H1 (cell line): ENCODE measurements at regions of chr5 and their contacts with region 1.

Region 1: GRCh38 chr5:103441523-103441922 is 121.1 kb downstream of the NUDT12 start:
- DNase-seq: no peak
- H3K4me3 ChIP-seq: no peak overlapping the region
- H3K27ac ChIP-seq: no peak overlapping the region
- H3K4me1 ChIP-seq: peaks cover 0 to 7% (median 2%) of the 10 kb centered on the region in 4 experiments; a peak in 3 of 7 replicates
- H3K27me3 ChIP-seq: no peaks in the 10 kb centered on the region
- CTCF ChIP-seq: peak in 2 of 3 experiments; percentile 33 to 41; a peak in 2 of 4 replicates
- EP300 ChIP-seq: no peak
- POLR2A ChIP-seq: no peak
- RAD21 ChIP-seq: peak; percentile 19 to 44; a peak in 3 of 4 replicates

Region 2: GRCh38 chr5:103393101-103393754 is 48.3 kb before region 1 on chr5:
- CTCF ChIA-PET with region 1: interaction called, 13 read pairs
- POLR2A ChIA-PET with region 1: no interaction called
- DNase-seq: no peak
- H3K4me3 ChIP-seq: no peak overlapping the region
- H3K27ac ChIP-seq: no peak overlapping the region
- H3K4me1 ChIP-seq: peaks cover 0 to 17% (median 11%) of the 10 kb centered on the region in 4 experiments; a peak in 4 of 7 replicates
- H3K27me3 ChIP-seq: no peaks in the 10 kb centered on the region
- CTCF ChIP-seq: peak in 2 of 3 experiments; percentile 34 to 44; a peak in 3 of 4 replicates
- EP300 ChIP-seq: no peak
- POLR2A ChIP-seq: no peak
- RAD21 ChIP-seq: peak; percentile 54 to 65

Region 3: DNA sequence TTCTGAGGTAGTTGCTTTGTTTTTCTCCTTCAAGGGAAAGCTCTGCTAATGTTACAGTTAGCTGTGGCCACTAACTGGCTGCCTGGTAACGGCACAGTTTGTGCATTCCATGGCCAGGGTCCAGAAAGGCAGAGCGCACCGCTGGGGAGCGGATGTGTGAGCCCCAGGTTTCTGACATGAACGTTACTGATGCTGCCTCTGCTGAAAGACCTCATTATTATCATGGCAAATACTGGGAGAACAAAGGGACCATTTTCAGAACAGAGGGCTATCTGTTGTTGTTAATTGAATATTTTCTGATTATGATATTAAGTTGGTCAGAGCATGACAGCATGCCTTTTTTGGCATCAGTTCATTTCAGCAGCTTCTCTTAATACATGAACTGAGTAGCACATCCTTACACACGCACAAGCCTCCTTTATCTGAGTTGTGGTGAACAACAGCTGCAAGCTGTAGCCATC is 13.1 kb before region 1 on chr5:
- CTCF ChIA-PET with region 1: interaction called, 18 read pairs
- POLR2A ChIA-PET with region 1: no interaction called
- DNase-seq: no peak
- H3K4me3 ChIP-seq: no peak overlapping the region
- H3K27ac ChIP-seq: no peak overlapping the region
- H3K4me1 ChIP-seq: no peaks in the 10 kb centered on the region
- H3K27me3 ChIP-seq: no peaks in the 10 kb centered on the region
- CTCF ChIP-seq: no peak
- EP300 ChIP-seq: no peak
- POLR2A ChIP-seq: no peak
- RAD21 ChIP-seq: no peak

Region 4: GRCh38 chr5:103648086-103648485 is 206.6 kb after region 1 on chr5:
- CTCF ChIA-PET with region 1: no interaction called
- POLR2A ChIA-PET with region 1: no interaction called
- DNase-seq: no peak
- H3K4me3 ChIP-seq: no peak overlapping the region
- H3K27ac ChIP-seq: no peak overlapping the region
- H3K4me1 ChIP-seq: peaks cover 0 to 25% (median 5%) of the 10 kb centered on the region in 4 experiments; a peak in 5 of 7 replicates
- H3K27me3 ChIP-seq: no peaks in the 10 kb centered on the region
- CTCF ChIP-seq: peak in 1 of 3 experiments; percentile 39; a peak in 1 of 4 replicates
- EP300 ChIP-seq: no peak
- POLR2A ChIP-seq: no peak
- RAD21 ChIP-seq: peak in 1 of 2 experiments; percentile 16; a peak in 1 of 4 replicates